Sigmoid colon (tissue), 7 donors: ENCODE measurements at regions of chr9 and their contacts with region 1.

Region 1: DNA sequence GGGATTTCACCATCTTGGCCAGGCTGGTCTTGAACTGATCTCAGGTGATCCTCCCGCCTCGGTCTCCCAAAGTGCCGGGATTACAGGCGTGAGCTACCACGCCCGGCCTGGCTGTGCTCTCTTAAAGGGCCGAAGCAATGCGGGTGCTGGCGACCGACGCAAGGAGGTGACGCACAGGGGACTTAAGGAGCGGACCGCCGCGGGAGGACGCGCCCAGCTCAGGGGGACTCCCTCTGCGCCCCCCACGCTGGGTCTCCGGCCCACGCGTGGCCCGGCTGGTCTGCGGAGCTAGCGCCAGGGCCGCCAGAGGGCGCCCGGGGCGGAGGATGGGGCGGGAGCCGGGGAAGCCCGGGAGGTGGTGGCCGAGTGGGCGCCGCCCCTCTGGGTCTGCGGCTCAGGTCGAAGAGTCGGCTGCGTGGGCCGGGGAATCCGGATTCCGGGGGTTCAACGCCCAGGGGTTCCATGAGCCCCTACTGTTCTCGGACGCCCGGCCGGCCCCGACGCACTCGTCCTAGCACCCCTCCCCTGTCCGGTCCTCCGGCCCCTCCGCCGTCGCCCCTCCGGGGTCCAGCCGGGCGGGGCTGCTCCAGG is 502 bp upstream of the CERCAM start:
- DNase-seq: peak; percentile 87
- H3K4me3 ChIP-seq: peak overlapping the region; percentile 74 to 100 (median 94)
- H3K27ac ChIP-seq: peak overlapping the region; percentile 75 to 92 (median 86)
- H3K4me1 ChIP-seq: peaks cover 0 to 27% (median 24%) of the 10 kb centered on the region in 4 donors
- H3K27me3 ChIP-seq: peaks cover 0 to 12% (median 0%) of the 10 kb centered on the region in 3 donors
- CTCF ChIP-seq: peak; percentile 46 to 80 (median 70)
- EP300 ChIP-seq: no peak
- POLR2A ChIP-seq: no peak

Region 2: GRCh38 chr9:128361986-128362646 is 58.0 kb before region 1 on chr9:
- intact Hi-C with region 1: loop called (anchors 1 kb)
- DNase-seq: peak; percentile 93
- H3K4me3 ChIP-seq: peak overlapping the region in 3 of 4 donors; percentile 27 to 46 (median 45)
- H3K27ac ChIP-seq: peak overlapping the region; percentile 63 to 76 (median 71)
- H3K4me1 ChIP-seq: peaks cover 0 to 27% (median 24%) of the 10 kb centered on the region in 4 donors
- H3K27me3 ChIP-seq: no peaks in the 10 kb centered on the region
- CTCF ChIP-seq: peak; percentile 80 to 92 (median 86)
- EP300 ChIP-seq: no peak
- POLR2A ChIP-seq: no peak